Ascending aorta (tissue), 2 donors: ENCODE measurements at regions of chr11 and their contacts with region 1.

Region 1: GRCh38 chr11:46736615-46737014 is 17.6 kb downstream of the F2 start:
- DNase-seq: no peak
- H3K4me3 ChIP-seq: no peak overlapping the region
- H3K27ac ChIP-seq: peak overlapping the region in 1 of 2 donors; percentile 4
- H3K4me1 ChIP-seq: no peaks in the 10 kb centered on the region
- H3K27me3 ChIP-seq: no peaks in the 10 kb centered on the region
- CTCF ChIP-seq: no peak

Region 2: DNA sequence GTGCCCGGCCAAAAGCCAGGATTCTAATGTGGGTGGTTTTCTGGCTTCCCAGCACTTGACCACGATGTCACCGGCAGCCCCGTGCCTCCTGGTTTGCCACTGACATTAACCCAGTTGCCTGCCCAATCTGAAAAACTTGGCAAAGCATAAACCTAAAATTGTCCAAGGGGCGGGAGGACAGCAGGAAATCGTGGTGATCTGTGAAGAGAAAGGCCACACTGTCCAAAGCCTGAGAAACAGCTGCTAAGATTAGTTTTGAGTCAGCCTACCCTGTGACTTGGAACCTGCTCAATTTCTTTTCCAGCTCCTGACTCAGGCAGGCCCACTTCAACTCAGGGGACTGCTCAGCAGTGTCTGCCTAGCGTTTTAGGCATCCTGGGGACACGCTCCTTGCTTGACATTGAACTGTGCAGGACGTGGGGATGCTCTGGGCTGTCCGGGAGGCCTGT is 25.8 kb before region 1 on chr11:
- intact Hi-C with region 1: loop called (anchors 2 kb)
- DNase-seq: peak; percentile 72 to 94
- H3K4me3 ChIP-seq: no peak overlapping the region
- H3K27ac ChIP-seq: peak overlapping the region; percentile 95 to 96
- H3K4me1 ChIP-seq: peaks cover 5 to 37% of the 10 kb centered on the region in 2 donors
- H3K27me3 ChIP-seq: no peaks in the 10 kb centered on the region
- CTCF ChIP-seq: no peak